Activated CD8-positive, alpha-beta T cell treated with anti-CD3 and anti-CD28 coated beads for 36 hours (primary cell): ENCODE measurements at regions of chr6 and their contacts with region 1.

Region 1: DNA sequence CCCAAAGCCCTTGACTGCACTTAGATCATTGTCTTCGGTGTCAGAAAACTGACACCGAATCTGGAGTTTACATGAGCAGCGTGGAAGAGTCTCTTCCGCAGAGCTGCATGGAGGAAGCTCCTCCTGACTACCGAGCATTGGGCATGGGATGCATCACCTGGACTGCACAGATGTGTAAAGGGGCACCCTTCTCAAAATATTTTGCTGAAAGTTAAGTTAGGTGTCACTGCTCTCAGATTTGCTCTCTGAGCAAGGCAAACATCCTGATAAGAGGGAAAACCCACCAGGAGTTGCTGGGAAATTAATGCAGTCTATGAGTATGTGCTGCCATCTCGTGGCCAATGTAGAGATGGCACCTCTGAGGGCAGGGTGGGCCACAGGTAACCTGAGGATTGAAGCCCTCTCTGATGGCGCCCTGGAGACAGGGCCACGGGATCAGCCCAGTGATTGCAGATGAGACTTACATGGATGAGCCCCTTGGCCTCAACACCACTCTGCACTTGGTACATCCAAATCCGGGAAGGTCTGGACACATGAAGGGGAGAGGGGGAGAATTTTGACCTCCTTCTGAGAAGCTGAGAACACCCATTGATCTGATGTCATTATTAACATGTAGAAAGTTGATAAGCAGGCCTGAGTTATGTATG is 129.9 kb downstream of the LPA start:
- DNase-seq: peak; percentile 69
- ATAC-seq: peak; percentile 94
- H3K4me3 Mint-ChIP-seq: no peak overlapping the region
- H3K27ac Mint-ChIP-seq: no peak overlapping the region
- H3K4me1 Mint-ChIP-seq: no peaks in the 10 kb centered on the region
- H3K27me3 Mint-ChIP-seq: peaks cover 6% of the 10 kb centered on the region
- CTCF ChIP-seq: peak; percentile 95

Region 2: DNA sequence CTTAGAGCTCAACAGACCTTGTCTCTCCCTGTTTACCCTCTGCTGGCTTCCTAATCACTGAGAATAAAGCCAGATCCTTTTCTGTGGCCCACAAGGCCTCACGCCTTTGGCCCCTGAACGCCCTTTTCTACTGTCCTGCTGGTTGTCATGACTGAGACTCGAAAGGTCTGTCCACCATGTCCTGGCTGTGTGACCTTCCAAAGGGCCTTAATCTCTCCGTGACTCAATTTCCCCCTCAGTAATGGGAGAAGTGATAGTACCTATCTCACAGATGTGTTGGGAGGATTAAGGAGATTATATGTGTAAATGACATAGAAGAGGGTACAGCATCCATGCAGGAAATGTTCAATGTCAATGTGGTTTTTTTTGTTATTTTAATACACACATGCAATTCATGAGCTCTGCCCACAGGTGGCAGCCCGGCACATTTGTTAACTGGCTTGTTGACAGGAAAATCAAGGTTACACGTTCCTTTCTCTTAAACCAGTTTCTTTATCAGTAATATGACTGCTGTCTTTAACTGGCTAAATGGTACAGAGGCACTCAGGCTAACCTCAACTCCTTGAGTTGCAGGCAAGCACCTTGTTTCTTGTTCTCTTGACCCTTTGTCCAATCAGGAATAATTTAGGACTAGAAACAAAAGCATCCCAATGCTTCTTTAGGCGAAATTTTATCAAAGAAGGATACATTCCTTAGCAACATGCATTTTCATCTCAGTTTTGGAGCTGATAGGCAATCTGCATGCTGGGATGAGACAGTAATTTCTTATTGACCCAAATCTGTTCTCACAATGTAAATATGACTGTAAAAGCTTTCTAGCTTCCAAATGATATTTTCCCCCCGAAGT is 396.0 kb before region 1 on chr6:
- CTCF ChIA-PET with region 1: interaction called, 8 read pairs
- POLR2A ChIA-PET with region 1: no interaction called
- intact Hi-C with region 1: loop called (anchors 5 kb)
- DNase-seq: peak; percentile 75
- ATAC-seq: peak; percentile 81
- H3K4me3 Mint-ChIP-seq: no peak overlapping the region
- H3K27ac Mint-ChIP-seq: no peak overlapping the region
- H3K4me1 Mint-ChIP-seq: peaks cover 10% of the 10 kb centered on the region
- H3K27me3 Mint-ChIP-seq: no peaks in the 10 kb centered on the region
- CTCF ChIP-seq: peak; percentile 83

Region 3: GRCh38 chr6:160428069-160428430 is 106.1 kb before region 1 on chr6:
- CTCF ChIA-PET with region 1: no interaction called
- POLR2A ChIA-PET with region 1: no interaction called
- intact Hi-C with region 1: no loop called
- DNase-seq: no peak
- ATAC-seq: no peak
- H3K4me3 Mint-ChIP-seq: no peak overlapping the region
- H3K27ac Mint-ChIP-seq: no peak overlapping the region
- H3K4me1 Mint-ChIP-seq: peaks cover 10% of the 10 kb centered on the region
- H3K27me3 Mint-ChIP-seq: peaks cover 44% of the 10 kb centered on the region
- CTCF ChIP-seq: no peak

Region 4: GRCh38 chr6:160455541-160456213 is 78.5 kb before region 1 on chr6:
- CTCF ChIA-PET with region 1: interaction called, 12 read pairs
- POLR2A ChIA-PET with region 1: no interaction called
- intact Hi-C with region 1: loop called (anchors 1 kb)
- DNase-seq: peak; percentile 72
- ATAC-seq: peak; percentile 96
- H3K4me3 Mint-ChIP-seq: no peak overlapping the region
- H3K27ac Mint-ChIP-seq: no peak overlapping the region
- H3K4me1 Mint-ChIP-seq: peaks cover 18% of the 10 kb centered on the region
- H3K27me3 Mint-ChIP-seq: peaks cover 24% of the 10 kb centered on the region
- CTCF ChIP-seq: peak; percentile 97

Region 5: DNA sequence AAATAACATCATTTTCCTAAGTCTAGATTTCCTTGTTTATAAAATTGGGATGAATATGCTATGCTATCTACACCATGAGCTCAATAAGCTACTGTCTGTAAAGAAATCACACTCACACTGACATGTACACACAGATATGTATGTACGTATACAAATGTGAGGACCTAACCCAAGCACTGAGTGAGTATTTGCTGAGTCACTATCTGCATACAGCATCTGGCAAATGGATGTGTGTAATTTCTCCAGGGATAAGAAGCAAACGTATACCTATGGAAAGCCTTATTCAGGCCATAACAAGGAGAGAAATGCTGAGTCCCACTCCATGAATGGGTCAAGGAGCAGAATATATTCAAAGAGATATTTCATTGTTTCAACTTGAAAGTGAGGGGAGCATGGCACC is 24.0 kb before region 1 on chr6:
- CTCF ChIA-PET with region 1: interaction called, 12 read pairs
- POLR2A ChIA-PET with region 1: no interaction called
- intact Hi-C with region 1: no loop called
- DNase-seq: no peak
- ATAC-seq: no peak
- H3K4me3 Mint-ChIP-seq: no peak overlapping the region
- H3K27ac Mint-ChIP-seq: no peak overlapping the region
- H3K4me1 Mint-ChIP-seq: no peaks in the 10 kb centered on the region
- H3K27me3 Mint-ChIP-seq: peaks cover 11% of the 10 kb centered on the region
- CTCF ChIP-seq: no peak

Region 6: GRCh38 chr6:160520043-160520904 is 13.9 kb before region 1 on chr6:
- CTCF ChIA-PET with region 1: interaction called, 143 read pairs
- POLR2A ChIA-PET with region 1: interaction called, 4 read pairs
- intact Hi-C with region 1: no loop called
- DNase-seq: peak; percentile 64
- ATAC-seq: peak; percentile 83
- H3K4me3 Mint-ChIP-seq: peak overlapping the region; percentile 87
- H3K27ac Mint-ChIP-seq: peak overlapping the region; percentile 92
- H3K4me1 Mint-ChIP-seq: peaks cover 10% of the 10 kb centered on the region
- H3K27me3 Mint-ChIP-seq: peaks cover 3% of the 10 kb centered on the region
- CTCF ChIP-seq: peak; percentile 96

Region 7: GRCh38 chr6:160544802-160545201 is 10.6 kb after region 1 on chr6:
- CTCF ChIA-PET with region 1: interaction called, 13 read pairs
- POLR2A ChIA-PET with region 1: no interaction called
- intact Hi-C with region 1: no loop called
- DNase-seq: no peak
- ATAC-seq: no peak
- H3K4me3 Mint-ChIP-seq: no peak overlapping the region
- H3K27ac Mint-ChIP-seq: no peak overlapping the region
- H3K4me1 Mint-ChIP-seq: no peaks in the 10 kb centered on the region
- H3K27me3 Mint-ChIP-seq: peaks cover 7% of the 10 kb centered on the region
- CTCF ChIP-seq: no peak